Mammary epithelial cell (primary cell): ENCODE measurements at regions of chr11 and their contacts with region 1.

Region 1: DNA sequence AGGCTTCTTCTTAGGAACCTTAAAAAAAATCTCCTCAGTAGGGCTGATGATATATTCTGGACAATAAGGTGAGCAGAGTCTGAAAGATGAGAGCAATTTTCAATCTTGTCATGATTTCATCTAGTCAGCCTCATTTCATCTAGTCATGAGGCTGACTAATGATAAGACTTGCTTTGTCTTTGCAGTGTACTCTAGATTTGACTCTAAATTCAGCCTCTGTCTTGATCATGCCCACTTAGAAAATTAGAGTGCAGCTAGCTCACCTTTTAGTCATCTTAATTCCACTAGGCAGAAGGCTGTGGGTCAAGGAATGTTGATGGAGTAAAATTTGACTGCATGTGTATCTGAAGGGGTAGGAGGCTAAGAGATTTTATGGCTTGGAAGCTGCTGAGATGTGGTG is 5.5 kb downstream of the EHF start:
- DNase-seq: peak; percentile 77
- H3K4me3 ChIP-seq: no peak overlapping the region
- H3K27ac ChIP-seq: peak overlapping the region; percentile 63
- H3K4me1 ChIP-seq: peaks cover 31% of the 10 kb centered on the region
- H3K27me3 ChIP-seq: no peaks in the 10 kb centered on the region
- CTCF ChIP-seq: no peak

Region 2: GRCh38 chr11:34680918-34681554 is 54.6 kb after region 1 on chr11:
- CTCF ChIA-PET with region 1: no interaction called
- dilution Hi-C with region 1: no loop called
- in situ Hi-C with region 1: no loop called
- intact Hi-C with region 1: loop called (anchors 2 kb)
- DNase-seq: peak; percentile 90
- H3K4me3 ChIP-seq: no peak overlapping the region
- H3K27ac ChIP-seq: peak overlapping the region; percentile 60
- H3K4me1 ChIP-seq: peaks cover 36% of the 10 kb centered on the region
- H3K27me3 ChIP-seq: no peaks in the 10 kb centered on the region
- CTCF ChIP-seq: no peak